ENCODE measurements at regions of chr6 and their contacts with region 1.

Region 1: DNA sequence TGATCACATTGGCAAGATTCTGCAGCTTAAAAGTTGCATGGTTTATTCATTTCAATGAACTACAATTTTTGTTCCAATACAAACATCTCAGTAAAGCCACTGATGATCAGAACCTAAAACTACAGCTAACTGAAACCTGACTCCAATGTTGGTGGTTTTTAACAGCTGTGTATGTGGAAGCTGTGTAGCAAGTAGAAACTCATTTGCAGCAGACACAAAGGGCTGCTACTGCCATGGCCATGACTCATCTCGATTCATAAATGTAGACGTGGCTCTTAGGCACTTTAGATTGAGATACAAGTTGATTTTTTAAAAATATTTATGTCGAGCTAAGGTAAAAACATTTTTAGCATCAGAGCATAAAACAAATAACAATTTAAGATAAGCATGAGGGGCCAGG is 19.5 kb upstream of the MAP3K4 start:
- DNase-seq: peak; percentile 90
- H3K4me3 ChIP-seq: no peak overlapping the region
- H3K27ac ChIP-seq: peak overlapping the region; percentile 89
- H3K27me3 ChIP-seq: no peaks in the 10 kb centered on the region
- CTCF ChIP-seq: no peak

Region 2: GRCh38 chr6:159929819-159930218 is 1042.3 kb before region 1 on chr6:
- CTCF ChIA-PET with region 1: interaction called, 11 read pairs
- POLR2A ChIA-PET with region 1: no interaction called
- DNase-seq: no peak
- H3K4me3 ChIP-seq: no peak overlapping the region
- H3K27ac ChIP-seq: no peak overlapping the region
- H3K27me3 ChIP-seq: peaks cover 3% of the 10 kb centered on the region
- CTCF ChIP-seq: no peak

Measured in AG04450 (cell line).